ENCODE measurements at regions of chr2 and their contacts with region 1.

Region 1: DNA sequence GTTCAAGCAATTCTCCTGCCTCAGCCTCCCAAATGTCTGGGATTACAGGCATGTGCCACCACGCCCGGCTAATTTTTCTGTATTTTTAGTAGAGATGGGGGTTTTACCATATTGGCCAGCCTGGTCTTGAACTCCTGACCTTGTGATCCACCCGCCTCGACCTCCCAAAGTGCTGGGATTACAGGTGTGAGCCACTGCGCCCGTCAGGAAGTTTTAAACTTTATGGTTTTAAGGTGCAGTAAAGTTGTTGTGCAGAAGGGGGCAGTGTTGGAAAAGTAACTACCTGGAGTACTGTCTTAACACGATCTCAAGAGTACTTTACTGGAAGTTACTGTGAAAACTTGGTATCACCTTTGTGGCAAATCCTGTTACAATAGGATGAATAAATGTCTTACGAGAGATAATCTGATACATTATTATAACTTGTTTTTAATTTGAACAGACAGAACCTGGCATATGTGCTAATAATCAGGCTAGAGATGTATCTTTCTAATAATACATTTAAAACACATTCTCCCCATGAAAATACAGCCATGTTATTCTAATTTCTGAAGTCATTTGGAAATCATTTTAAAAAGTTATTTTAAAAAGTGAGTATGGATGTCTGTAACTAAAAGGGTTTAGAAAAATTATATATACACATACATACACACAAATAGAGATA is 10.8 kb downstream of the SPDYA start:
- DNase-seq: no peak
- ATAC-seq: peak; percentile 38 to 58

Region 2: GRCh38 chr2:28423856-28424605 is 397.4 kb before region 1 on chr2:
- intact Hi-C with region 1: no loop called
- DNase-seq: no peak
- ATAC-seq: peak; percentile 27 to 46

Region 3: GRCh38 chr2:29196792-29197788 is 375.7 kb after region 1 on chr2:
- intact Hi-C with region 1: loop called in 1 of 2 experiments (anchors 5 kb)
- DNase-seq: peak; percentile 62
- ATAC-seq: peak; percentile 83 to 88

Measured in left cardiac atrium (tissue), 4 donors.